Lower leg skin (tissue), 4 donors: ENCODE measurements at regions of chr18 and their contacts with region 1.

Region 1: DNA sequence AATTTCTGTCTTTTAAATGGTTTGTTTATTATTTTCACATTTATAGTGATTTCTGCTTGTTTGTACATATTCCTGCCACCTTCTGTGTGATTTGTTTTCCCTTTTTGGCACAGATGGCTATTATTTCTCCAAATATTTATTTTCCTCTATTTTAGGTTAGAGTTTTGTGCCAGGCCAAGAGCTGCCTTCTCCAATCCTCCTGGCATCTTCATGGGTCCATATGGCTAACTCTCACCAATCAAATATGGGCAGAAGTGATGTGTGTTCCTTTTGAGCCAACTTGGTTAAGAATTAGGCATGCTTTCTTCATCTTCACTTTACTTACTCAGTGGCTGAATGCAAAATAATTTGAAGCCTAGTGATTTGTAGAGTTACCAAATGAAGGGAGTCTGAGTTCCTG is 697.1 kb upstream of the CELF4 start:
- DNase-seq: no peak
- H3K4me3 ChIP-seq: no peak overlapping the region
- CTCF ChIP-seq: no peak
- POLR2A ChIP-seq: no peak

Region 2: GRCh38 chr18:37913051-37913450 is 349.6 kb before region 1 on chr18:
- intact Hi-C with region 1: no loop called
- DNase-seq: no peak
- H3K4me3 ChIP-seq: no peak overlapping the region
- CTCF ChIP-seq: no peak
- POLR2A ChIP-seq: no peak

Region 3: GRCh38 chr18:38241736-38242135 is 20.9 kb before region 1 on chr18:
- intact Hi-C with region 1: loop called (anchors 1 kb)
- DNase-seq: no peak
- H3K4me3 ChIP-seq: no peak overlapping the region
- CTCF ChIP-seq: no peak
- POLR2A ChIP-seq: no peak

Region 4: DNA sequence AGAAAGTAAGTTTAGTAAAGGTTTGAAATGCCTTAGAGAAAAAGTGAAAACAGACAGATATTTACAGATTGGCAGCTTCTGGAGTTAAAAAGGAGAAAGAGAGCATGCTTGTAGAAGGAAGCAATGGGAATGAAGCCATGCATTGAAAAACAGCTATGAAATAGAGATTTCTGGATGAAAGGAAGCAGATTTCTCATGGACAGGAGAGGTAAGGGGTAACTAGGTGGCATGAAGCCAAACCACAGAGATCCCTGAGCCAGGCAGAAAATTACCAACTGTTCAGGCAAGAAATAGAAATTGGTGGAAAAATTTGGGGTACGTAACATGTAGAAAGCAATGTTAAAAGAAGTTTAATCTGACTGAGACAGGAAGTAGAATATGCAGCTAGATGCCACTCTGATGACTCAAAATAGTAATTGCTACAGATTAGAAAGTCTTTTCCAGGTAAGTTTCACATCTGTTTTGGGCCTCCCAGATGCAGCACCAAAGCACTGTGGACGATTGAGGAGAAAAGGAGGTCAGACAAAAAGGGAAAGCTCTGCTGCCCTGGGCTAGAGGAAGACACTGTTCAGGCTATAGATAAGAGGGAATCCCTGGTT is 231.4 kb after region 1 on chr18:
- intact Hi-C with region 1: no loop called
- DNase-seq: no peak
- H3K4me3 ChIP-seq: no peak overlapping the region
- CTCF ChIP-seq: no peak
- POLR2A ChIP-seq: no peak